ENCODE measurements at regions of chr14 and their contacts with region 1.

Region 1: DNA sequence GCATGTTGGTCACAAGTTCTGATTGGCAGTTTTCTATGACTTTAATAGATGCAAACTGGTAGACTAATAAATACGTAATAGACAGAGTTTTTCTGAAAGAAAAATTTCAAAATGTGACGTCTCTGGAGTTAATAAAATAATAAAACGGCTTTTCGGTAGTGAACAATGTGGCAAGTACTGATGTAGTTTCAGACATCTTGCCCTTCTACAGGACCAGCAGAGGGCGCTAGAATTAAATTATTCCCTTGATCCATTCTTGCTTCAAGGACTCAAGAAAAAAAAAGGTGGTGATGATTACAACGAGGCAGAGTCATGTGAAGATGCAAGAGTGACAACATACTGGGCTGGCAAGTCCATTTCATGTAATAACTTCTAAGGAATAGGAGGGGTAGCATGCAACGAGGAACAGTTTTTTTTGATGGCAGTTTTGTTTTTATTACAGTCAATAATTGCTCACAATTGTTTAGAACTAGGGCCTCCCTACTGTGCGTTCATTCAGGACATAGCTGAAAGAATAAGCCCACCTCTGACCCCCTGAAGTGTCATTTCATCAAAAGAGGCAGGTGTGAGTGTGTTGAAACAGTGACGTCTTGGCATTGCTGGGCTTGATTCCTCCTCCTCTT is 101.0 kb upstream of the GZMB start:
- DNase-seq: peak; percentile 54 to 65 (median 55)
- ATAC-seq: peak; percentile 75
- H3K4me3 ChIP-seq: no peak overlapping the region
- H3K27ac ChIP-seq: no peak overlapping the region
- H3K4me1 ChIP-seq: no peaks in the 10 kb centered on the region
- H3K27me3 ChIP-seq: no peaks in the 10 kb centered on the region
- CTCF ChIP-seq: peak; percentile 34 to 83 (median 75)
- POLR2A ChIP-seq: no peak

Region 2: DNA sequence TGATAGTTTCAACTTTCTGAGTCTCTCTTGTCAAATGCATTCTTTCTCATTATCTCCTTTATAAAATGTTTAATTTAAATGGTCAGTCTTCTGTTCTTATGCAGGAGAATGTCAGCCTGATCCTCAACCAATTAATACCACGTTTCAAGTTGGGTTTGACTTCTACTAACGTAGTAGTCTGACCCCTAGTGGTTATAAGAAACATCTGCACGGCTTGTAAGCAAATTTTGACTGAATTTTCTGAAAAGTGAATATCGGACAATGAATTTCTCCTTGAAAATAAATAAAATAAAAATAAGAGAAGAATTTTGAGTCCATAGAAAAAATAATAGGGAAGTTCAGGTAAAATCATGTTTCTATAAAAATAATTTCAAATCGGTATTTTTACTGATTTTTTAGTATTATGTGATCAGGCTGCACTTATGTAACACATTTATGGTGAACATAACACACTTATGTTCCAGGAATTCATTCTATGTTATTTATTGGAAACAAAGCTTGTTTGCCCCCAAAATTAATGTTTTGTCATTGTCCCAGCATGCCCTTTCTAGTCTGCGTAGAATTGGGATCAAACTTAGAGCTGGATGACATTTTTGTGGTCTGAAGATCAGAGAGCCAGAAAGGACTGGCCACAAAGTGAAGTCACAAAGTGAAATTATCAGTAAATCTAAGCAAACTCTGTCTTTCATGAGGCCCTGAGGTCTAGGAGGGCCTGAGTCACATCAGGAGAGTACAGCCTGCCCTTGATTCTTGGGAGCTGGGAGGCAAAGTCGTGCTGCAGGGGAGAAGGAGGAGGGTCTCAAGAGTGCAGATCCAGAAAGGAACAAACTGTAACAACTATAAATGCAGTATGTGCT is 416.2 kb after region 1 on chr14:
- intact Hi-C with region 1: loop called (anchors 5 kb)
- DNase-seq: peak in 1 of 4 donors; percentile 3
- ATAC-seq: peak; percentile 45
- H3K4me3 ChIP-seq: no peak overlapping the region
- H3K27ac ChIP-seq: no peak overlapping the region
- H3K4me1 ChIP-seq: no peaks in the 10 kb centered on the region
- H3K27me3 ChIP-seq: no peaks in the 10 kb centered on the region
- CTCF ChIP-seq: peak; percentile 60 to 90 (median 83)
- POLR2A ChIP-seq: no peak